Activated CD4-positive, alpha-beta memory T cell treated with anti-CD3 and anti-CD28 coated beads, Interleukin-2, amount 10 ng/mL, durations not matched to agents 7 days and 5 days (primary cell): ENCODE measurements at regions of chr15 and their contacts with region 1.

Region 1: DNA sequence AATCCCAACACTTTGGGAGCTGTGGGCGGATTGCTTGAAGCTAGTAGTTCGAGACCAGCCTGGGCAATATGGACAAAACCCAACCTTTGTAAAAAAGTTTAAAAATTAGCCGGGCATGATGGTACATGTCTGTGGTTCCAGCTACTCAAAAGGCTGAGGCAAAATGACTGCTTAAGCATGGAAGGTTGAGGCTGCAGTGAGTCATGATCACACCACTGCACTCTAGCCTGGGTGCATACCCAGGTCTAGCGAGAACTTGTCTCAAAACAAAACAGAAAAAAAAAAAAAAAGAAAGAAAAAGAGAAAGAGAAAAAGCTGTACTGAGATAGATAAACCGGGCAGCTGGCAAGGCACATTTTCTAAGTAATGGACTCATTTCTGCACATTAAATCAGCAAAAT is 10.6 kb downstream of the ARPP19 start:
- DNase-seq: peak; percentile 77
- H3K4me3 Mint-ChIP-seq: peak overlapping the region; percentile 58
- H3K27ac Mint-ChIP-seq: peak overlapping the region; percentile 89
- H3K4me1 Mint-ChIP-seq: peaks cover 64% of the 10 kb centered on the region
- H3K27me3 Mint-ChIP-seq: no peaks in the 10 kb centered on the region

Region 2: GRCh38 chr15:52546031-52546751 is 12.0 kb before region 1 on chr15:
- CTCF ChIA-PET with region 1: interaction called, 6 read pairs
- POLR2A ChIA-PET with region 1: interaction called, 11 read pairs
- DNase-seq: peak; percentile 63
- H3K4me3 Mint-ChIP-seq: peak overlapping the region; percentile 33
- H3K27ac Mint-ChIP-seq: peak overlapping the region; percentile 70
- H3K4me1 Mint-ChIP-seq: peaks cover 24% of the 10 kb centered on the region
- H3K27me3 Mint-ChIP-seq: no peaks in the 10 kb centered on the region

Region 3: GRCh38 chr15:52568601-52569256 is 10.5 kb after region 1 on chr15 and contains the start of gene ARPP19:
- CTCF ChIA-PET with region 1: interaction called, 7 read pairs
- POLR2A ChIA-PET with region 1: interaction called, 18 read pairs
- DNase-seq: peak; percentile 86
- H3K4me3 Mint-ChIP-seq: peak within 1 kb of the TSS; percentile 90
- H3K27ac Mint-ChIP-seq: peak within 1 kb of the TSS; percentile 97
- H3K4me1 Mint-ChIP-seq: peaks cover 33% of the 10 kb centered on the region
- H3K27me3 Mint-ChIP-seq: no peaks in the 10 kb centered on the region
- total RNA-seq, gene ARPP19: 176 to 193 TPM

Region 4: GRCh38 chr15:52689562-52689961 is 131.4 kb after region 1 on chr15:
- CTCF ChIA-PET with region 1: no interaction called
- POLR2A ChIA-PET with region 1: no interaction called
- DNase-seq: no peak
- H3K4me3 Mint-ChIP-seq: no peak overlapping the region
- H3K27ac Mint-ChIP-seq: no peak overlapping the region
- H3K4me1 Mint-ChIP-seq: no peaks in the 10 kb centered on the region
- H3K27me3 Mint-ChIP-seq: no peaks in the 10 kb centered on the region